Lower leg skin (tissue), 4 donors: ENCODE measurements at regions of chr1 and their contacts with region 1.

Region 1: DNA sequence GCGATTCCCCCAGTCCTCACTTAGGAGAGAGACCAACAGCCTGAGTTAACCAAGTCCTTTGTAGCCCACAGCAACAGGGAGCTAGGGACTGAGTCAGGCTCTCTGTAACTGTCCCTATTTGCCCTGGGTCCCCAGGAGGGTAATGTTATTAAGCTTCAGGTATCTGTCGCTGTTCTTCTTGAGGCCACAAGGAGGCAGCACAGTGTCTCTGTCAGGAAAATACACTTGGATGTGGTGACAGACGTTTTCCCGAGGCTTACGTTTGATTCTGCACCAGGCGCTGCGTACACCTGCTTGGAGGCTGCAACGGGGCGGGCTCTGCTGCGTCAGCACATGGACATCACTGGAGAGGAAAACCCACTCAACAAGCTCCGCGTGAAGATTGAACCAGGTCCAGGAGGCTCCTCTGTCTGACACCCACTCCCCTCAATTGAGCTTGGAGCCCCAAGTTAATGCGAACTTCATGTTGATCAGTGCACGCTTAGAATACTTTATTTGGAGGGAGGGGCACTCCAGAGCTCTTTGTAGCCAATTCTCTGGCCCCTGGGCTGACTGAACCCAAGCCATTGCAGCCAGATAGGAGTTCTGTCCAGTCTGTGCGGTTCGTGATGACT is 10.7 kb upstream of the ELF3 start:
- DNase-seq: no peak
- H3K4me3 ChIP-seq: no peak overlapping the region
- CTCF ChIP-seq: no peak
- POLR2A ChIP-seq: no peak

Region 2: GRCh38 chr1:201895913-201896807 is 103.6 kb before region 1 on chr1:
- intact Hi-C with region 1: no loop called
- DNase-seq: peak; percentile 78 to 97
- H3K4me3 ChIP-seq: no peak overlapping the region
- CTCF ChIP-seq: peak in 1 of 3 donors; percentile 88
- POLR2A ChIP-seq: no peak

Region 3: GRCh38 chr1:202117865-202118371 is 118.2 kb after region 1 on chr1:
- intact Hi-C with region 1: loop called (anchors 5 kb)
- DNase-seq: no peak
- H3K4me3 ChIP-seq: no peak overlapping the region
- CTCF ChIP-seq: no peak
- POLR2A ChIP-seq: no peak

Region 4: GRCh38 chr1:202132031-202132907 is 132.5 kb after region 1 on chr1:
- intact Hi-C with region 1: loop called (anchors 5 kb)
- DNase-seq: peak in 1 of 2 donors; percentile 58
- H3K4me3 ChIP-seq: no peak overlapping the region
- CTCF ChIP-seq: no peak
- POLR2A ChIP-seq: no peak